Heart right ventricle (tissue), 16 donors: ENCODE measurements at regions of chr1 and their contacts with region 1.

Region 1: DNA sequence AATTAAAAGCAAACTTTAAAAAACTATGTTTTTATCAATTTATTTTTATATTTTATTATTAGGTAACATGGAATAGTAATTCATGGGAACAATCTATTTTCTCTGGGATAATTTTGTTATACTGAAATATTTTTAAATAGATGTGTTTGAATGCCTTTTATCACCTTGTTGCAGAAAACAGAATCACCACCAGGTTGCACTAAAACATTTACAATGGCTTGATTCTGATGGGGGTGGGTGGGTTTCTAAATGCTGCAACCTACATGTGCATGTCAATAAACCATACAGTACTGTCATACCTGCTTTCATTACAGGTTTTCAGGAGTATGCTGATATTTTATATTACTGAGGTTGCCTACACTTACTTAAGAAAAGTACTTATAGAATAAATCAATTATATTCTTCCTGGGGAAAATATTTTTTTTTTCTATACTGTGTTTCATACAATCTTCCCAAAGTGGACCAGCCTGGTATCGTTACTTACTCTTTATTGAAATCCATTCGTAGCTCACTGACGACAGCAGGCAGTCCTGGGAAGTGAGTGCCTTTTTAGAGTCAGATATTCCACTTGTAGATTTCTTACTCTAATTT is 132.8 kb downstream of the PTPRC start:
- DNase-seq: no peak
- ATAC-seq: no peak
- H3K4me3 ChIP-seq: no peak overlapping the region
- H3K27ac ChIP-seq: no peak overlapping the region
- H3K4me1 ChIP-seq: peaks cover 0 to 25% (median 0%) of the 10 kb centered on the region in 9 donors
- H3K27me3 ChIP-seq: no peaks in the 10 kb centered on the region
- CTCF ChIP-seq: peak in 8 of 9 donors; percentile 11 to 65 (median 44)

Region 2: DNA sequence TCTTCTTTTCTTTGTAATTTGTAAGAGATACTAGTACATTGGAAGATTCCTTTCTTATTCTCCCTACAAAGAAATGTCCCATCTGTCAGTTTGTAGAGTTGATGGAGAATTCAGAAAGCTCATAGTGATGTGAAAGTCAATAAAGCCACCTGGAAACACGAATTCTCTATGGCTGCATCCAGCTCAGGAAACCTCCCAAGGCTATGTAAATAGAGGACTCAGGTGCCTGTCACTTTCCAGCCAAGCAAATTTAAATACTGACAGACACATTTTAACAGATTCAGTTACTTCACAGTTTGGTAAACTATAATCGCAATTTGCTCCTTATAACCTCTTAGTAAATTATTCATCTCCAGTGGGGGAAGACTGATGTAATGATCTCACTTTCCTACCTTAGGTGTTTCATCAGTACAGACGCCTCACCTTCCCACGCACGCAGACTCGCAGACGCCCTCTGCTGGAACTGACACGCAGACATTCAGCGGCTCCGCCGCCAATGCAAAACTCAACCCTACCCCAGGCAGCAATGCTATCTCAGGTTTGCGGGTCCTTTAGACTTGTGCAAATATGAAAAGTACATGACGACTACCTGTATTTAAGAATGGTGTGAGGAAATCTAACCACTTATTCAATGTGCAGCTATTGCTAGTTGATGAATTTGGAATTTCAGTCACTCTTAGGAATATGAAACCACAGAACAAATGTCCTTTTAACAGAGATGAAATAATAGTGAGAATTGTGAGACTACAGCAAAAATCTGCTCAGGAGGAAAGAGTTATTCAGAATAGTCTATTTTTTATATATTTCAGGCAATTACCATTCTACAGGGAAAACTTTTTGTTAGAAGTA is 72.3 kb before region 1 on chr1:
- intact Hi-C with region 1: no loop called
- DNase-seq: peak; percentile 9 to 34
- ATAC-seq: peak in 2 of 8 donors; percentile 44 to 54
- H3K4me3 ChIP-seq: no peak overlapping the region
- H3K27ac ChIP-seq: no peak overlapping the region
- H3K4me1 ChIP-seq: peaks cover 0 to 16% (median 0%) of the 10 kb centered on the region in 9 donors
- H3K27me3 ChIP-seq: peaks cover 0 to 33% (median 5%) of the 10 kb centered on the region in 7 donors
- CTCF ChIP-seq: peak in 8 of 9 donors; percentile 30 to 71 (median 62)

Region 3: DNA sequence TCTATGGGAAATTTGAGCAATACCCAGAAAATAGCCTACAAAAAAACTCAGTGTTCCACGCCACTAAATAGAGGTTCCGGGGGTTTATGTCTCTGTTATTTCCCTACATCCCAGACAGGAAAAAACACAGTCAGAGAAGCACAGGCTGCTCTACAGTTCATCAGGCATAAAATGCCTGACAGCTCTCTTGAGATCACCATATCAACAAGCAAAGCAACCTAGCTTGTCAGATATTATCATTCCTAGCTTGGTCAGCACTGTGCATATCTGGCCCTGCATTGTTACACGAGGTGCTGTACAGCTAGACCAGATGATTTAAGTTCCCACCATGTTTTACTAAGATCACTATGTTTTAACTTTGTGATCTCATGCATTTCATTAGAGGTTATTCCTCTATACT is 39.8 kb after region 1 on chr1:
- intact Hi-C with region 1: loop called in 1 of 10 experiments (anchors 2 kb)
- DNase-seq: no peak
- ATAC-seq: no peak
- H3K4me3 ChIP-seq: no peak overlapping the region
- H3K27ac ChIP-seq: no peak overlapping the region
- H3K4me1 ChIP-seq: peaks cover 0 to 5% (median 0%) of the 10 kb centered on the region in 9 donors
- H3K27me3 ChIP-seq: no peaks in the 10 kb centered on the region
- CTCF ChIP-seq: no peak

Region 4: DNA sequence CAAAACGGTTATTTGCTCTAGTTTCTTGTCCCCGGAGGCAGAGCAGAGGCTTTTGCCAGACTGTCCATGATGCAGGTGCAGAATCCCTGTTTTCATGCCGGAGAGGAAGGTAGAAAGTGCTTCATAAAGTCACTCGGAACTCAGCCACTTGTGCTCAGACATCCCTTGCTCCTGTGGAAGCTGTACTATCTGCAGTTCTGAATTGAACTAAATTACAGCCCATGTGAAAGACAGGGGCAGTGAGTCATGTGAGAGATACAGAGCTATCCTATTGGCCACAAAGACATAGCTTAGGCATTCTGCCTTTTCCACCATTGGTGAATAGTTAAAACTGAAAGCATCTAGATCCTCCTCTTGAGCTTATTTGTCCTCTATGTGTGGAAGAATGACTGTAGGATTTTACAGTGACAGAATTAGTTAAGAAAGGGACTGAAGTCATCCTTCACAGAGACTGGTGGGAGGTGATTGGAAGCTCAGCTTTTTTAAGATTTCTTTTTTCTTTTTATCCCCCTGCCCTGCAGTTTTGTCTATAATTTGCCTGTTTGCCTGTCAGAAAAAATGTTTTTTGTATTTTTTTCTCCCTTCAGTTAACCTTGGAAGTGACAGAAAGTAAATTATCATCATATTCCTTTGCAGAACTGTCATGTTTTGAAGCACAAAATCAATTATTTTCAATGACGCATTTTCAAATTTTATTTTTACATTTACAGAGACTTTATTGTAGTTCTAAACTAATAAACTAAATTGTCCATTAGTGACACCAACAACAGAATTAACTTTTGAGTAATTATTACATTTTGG is 165.8 kb after region 1 on chr1:
- intact Hi-C with region 1: loop called in 2 of 10 experiments (anchors 10 kb)
- DNase-seq: peak in 1 of 2 donors; percentile 67
- ATAC-seq: peak; percentile 97 to 98 (median 97)
- H3K4me3 ChIP-seq: peak overlapping the region; percentile 24 to 80 (median 59)
- H3K27ac ChIP-seq: peak overlapping the region in 9 of 10 donors; percentile 61 to 88 (median 77)
- H3K4me1 ChIP-seq: peaks cover 2 to 42% (median 20%) of the 10 kb centered on the region in 9 donors
- H3K27me3 ChIP-seq: no peaks in the 10 kb centered on the region
- CTCF ChIP-seq: no peak

Region 5: DNA sequence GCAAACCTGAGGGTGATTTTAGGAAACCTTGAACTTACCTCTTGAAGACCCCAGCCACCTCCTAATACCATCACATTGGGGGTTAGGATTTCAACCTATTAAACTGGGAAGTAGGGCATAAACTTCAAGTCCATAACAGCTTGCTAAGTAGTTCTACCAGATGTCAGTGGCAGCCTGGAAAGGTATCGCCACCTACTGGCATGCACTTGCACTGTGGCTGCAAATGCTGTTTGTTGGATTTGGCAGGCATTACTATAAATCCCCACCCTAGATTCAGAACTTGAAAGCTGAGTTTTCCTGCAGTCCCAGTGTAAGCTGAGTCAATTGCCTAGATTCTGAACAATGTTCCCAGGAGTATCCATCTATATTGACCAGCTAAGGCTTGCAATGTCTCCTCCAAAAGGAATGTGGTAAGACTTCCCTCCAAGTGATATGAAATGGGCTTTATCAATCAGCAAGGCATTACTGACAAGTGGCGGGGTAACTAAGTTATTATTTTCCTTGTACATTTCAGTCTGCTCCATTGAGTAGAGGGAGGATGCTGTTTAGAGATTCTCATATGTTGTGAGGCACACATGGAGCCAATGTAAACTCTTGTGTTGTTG is 341.7 kb after region 1 on chr1:
- intact Hi-C with region 1: loop called in 4 of 10 experiments (anchors 5 to 10 kb)
- DNase-seq: peak; percentile 29 to 33
- ATAC-seq: peak in 2 of 8 donors; percentile 33 to 42
- H3K4me3 ChIP-seq: no peak overlapping the region
- H3K27ac ChIP-seq: no peak overlapping the region
- H3K4me1 ChIP-seq: no peaks in the 10 kb centered on the region
- H3K27me3 ChIP-seq: no peaks in the 10 kb centered on the region
- CTCF ChIP-seq: peak; percentile 45 to 76 (median 65)

Region 6: DNA sequence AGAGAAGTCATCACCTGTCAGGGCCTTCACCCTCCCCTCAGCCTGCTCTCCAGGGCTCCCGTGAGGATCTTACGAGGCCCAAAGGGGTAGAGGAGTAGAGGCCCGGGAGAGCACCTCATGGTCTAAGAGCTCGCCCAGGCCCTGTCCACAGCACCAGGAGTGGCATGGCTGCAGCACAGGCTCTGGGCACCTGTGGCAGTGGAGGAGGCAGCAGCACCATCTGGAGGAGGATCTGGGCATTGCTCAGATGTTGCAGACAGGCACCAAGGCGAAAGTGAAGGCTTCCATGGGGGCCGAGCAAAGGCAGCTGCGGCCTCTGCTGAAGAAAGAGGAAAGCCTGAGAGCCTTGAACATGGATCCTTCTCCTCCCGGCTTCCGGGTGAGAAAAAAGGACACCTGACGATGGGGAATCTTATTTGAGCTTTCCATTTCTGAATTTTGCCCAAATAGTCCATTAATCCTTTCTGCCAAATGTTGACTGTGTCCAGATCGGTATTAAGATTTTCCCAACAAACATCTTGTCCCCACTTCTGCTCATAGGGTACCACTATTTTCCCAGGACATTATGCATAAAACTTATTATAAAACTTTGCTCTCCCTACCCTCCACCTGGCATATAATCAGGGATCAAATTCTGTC is 471.9 kb after region 1 on chr1:
- intact Hi-C with region 1: loop called in 4 of 10 experiments (anchors 5 to 10 kb)
- DNase-seq: peak; percentile 13 to 50
- ATAC-seq: peak in 7 of 8 donors; percentile 34 to 88 (median 69)
- H3K4me3 ChIP-seq: no peak overlapping the region
- H3K27ac ChIP-seq: no peak overlapping the region
- H3K4me1 ChIP-seq: no peaks in the 10 kb centered on the region
- H3K27me3 ChIP-seq: no peaks in the 10 kb centered on the region
- CTCF ChIP-seq: peak in 8 of 9 donors; percentile 36 to 73 (median 64)

Region 7: DNA sequence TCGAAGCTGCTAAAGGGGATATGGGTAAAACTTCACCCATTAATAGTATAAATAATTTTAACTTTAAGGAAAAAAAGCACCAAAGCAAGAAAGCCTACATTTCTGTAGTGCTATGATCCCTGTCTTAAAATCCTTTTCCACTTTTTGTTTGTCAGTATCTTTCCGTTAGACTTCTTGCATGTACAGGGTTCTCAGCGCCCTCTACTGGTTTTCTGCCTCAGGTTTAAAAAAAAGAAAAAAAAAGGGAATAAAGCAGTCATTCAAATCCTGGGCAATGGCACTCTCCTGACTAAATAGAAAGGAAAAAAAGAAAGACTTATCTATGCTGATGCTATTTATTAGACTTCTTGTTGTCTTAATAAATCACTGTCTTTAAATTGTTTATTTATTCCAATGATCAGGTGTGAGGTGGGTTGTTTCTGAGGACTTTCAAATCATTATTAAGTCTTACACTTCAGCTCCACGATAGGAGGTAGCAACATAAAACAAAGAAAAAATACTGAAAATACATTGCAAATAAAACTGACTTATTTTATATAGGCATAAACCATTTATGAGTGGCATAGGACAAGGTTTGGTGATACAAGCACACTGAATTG is 780.4 kb after region 1 on chr1:
- intact Hi-C with region 1: loop called in 2 of 10 experiments (anchors 5 to 10 kb)
- DNase-seq: peak in 1 of 2 donors; percentile 37
- ATAC-seq: no peak
- H3K4me3 ChIP-seq: no peak overlapping the region
- H3K27ac ChIP-seq: no peak overlapping the region
- H3K4me1 ChIP-seq: no peaks in the 10 kb centered on the region
- H3K27me3 ChIP-seq: peaks cover 0 to 3% (median 0%) of the 10 kb centered on the region in 7 donors
- CTCF ChIP-seq: peak in 8 of 9 donors; percentile 25 to 80 (median 70)